GM12878 (cell line): ENCODE measurements at regions of chr7 and their contacts with region 1.

Region 1: GRCh38 chr7:18276383-18276782 is 219.2 kb upstream of the HDAC9 start:
- DNase-seq: no peak
- ATAC-seq: 0 out of 3 replicates have a peak, but pooled peaks have one; percentile 33
- H3K4me3 ChIP-seq: no peak overlapping the region
- H3K27ac ChIP-seq: no peak overlapping the region
- H3K4me1 ChIP-seq: no peaks in the 10 kb centered on the region
- H3K27me3 ChIP-seq: no peaks in the 10 kb centered on the region
- CTCF ChIP-seq: no peak
- EP300 ChIP-seq: no peak
- POLR2A ChIP-seq: no peak
- RAD21 ChIP-seq: no peak

Region 2: GRCh38 chr7:17946591-17946990 is 329.8 kb before region 1 on chr7:
- CTCF ChIA-PET with region 1: no interaction called
- POLR2A ChIA-PET with region 1: no interaction called
- RAD21 ChIA-PET with region 1: no interaction called
- SMC1A ChIA-PET with region 1: no interaction called
- in situ Hi-C with region 1: no loop called
- intact Hi-C with region 1: no loop called
- DNase-seq: no peak
- ATAC-seq: peak; percentile 89
- H3K4me3 ChIP-seq: no peak overlapping the region
- H3K27ac ChIP-seq: no peak overlapping the region
- H3K4me1 ChIP-seq: 0 out of 2 replicates have a peak, but pooled peaks cover under 1% of the 10 kb centered on the region
- H3K27me3 ChIP-seq: peaks cover 0 to 5% of the 10 kb centered on the region in 2 experiments; a peak in 1 of 4 replicates
- CTCF ChIP-seq: no peak
- EP300 ChIP-seq: no peak
- POLR2A ChIP-seq: no peak
- RAD21 ChIP-seq: no peak

Region 3: DNA sequence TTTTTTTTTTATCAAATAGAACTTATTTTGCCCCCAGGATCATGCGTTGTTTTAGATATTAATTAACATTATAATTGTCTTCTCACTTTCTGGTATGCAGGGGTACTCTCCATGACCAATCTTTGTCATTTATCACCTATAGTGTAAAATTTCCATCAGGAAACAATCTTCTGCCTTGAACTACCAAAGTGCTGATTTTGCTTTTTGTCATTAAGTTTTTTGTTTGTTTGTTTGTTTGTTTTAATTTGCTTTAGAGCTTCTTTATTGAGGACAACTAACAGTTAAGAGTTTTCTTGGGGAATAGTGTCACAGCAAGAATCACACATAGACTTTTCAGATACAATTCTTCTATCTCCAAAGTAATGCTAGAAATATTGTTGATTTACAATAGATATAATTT is 77.5 kb before region 1 on chr7:
- CTCF ChIA-PET with region 1: no interaction called
- POLR2A ChIA-PET with region 1: no interaction called
- RAD21 ChIA-PET with region 1: no interaction called
- SMC1A ChIA-PET with region 1: no interaction called
- in situ Hi-C with region 1: no loop called
- intact Hi-C with region 1: no loop called
- DNase-seq: no peak
- ATAC-seq: no peak
- H3K4me3 ChIP-seq: no peak overlapping the region
- H3K27ac ChIP-seq: no peak overlapping the region
- H3K4me1 ChIP-seq: no peaks in the 10 kb centered on the region
- H3K27me3 ChIP-seq: no peaks in the 10 kb centered on the region; a peak in 1 of 4 replicates
- CTCF ChIP-seq: no peak
- EP300 ChIP-seq: no peak
- POLR2A ChIP-seq: no peak
- RAD21 ChIP-seq: no peak

Region 4: GRCh38 chr7:18243731-18244130 is 32.7 kb before region 1 on chr7:
- CTCF ChIA-PET with region 1: no interaction called
- POLR2A ChIA-PET with region 1: no interaction called
- RAD21 ChIA-PET with region 1: no interaction called
- SMC1A ChIA-PET with region 1: no interaction called
- in situ Hi-C with region 1: no loop called
- intact Hi-C with region 1: no loop called
- DNase-seq: no peak
- ATAC-seq: no peak
- H3K4me3 ChIP-seq: no peak overlapping the region
- H3K27ac ChIP-seq: no peak overlapping the region
- H3K4me1 ChIP-seq: no peaks in the 10 kb centered on the region
- H3K27me3 ChIP-seq: no peaks in the 10 kb centered on the region
- CTCF ChIP-seq: no peak
- EP300 ChIP-seq: no peak
- POLR2A ChIP-seq: no peak
- RAD21 ChIP-seq: no peak

Region 5: DNA sequence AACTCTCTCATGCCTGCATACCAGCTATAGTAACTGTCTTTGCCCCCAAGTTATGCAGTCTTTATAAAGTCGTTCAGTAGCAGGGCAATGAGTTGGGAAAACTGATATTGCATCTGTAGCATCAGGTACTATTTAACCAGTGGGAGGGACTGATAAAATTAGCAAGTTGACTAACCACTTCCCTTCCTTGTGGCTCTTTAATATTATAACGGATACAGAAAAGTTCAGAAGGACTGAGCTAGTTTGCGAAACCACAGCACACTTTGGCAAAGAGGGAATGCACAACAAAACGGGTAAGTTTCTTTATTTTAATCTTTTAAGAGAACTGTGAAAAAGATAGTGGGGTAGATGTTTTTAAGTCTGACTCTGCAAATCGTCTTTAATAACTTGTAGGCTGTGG is 13.8 kb after region 1 on chr7:
- CTCF ChIA-PET with region 1: interaction called, 4 read pairs
- POLR2A ChIA-PET with region 1: no interaction called
- RAD21 ChIA-PET with region 1: interaction called, 3 read pairs
- SMC1A ChIA-PET with region 1: interaction called, 15 read pairs
- in situ Hi-C with region 1: no loop called
- intact Hi-C with region 1: no loop called
- DNase-seq: no peak
- ATAC-seq: peak; percentile 64
- H3K4me3 ChIP-seq: no peak overlapping the region
- H3K27ac ChIP-seq: no peak overlapping the region
- H3K4me1 ChIP-seq: no peaks in the 10 kb centered on the region
- H3K27me3 ChIP-seq: no peaks in the 10 kb centered on the region; a peak in 1 of 4 replicates
- CTCF ChIP-seq: no peak
- EP300 ChIP-seq: no peak
- POLR2A ChIP-seq: no peak
- RAD21 ChIP-seq: no peak

Region 6: DNA sequence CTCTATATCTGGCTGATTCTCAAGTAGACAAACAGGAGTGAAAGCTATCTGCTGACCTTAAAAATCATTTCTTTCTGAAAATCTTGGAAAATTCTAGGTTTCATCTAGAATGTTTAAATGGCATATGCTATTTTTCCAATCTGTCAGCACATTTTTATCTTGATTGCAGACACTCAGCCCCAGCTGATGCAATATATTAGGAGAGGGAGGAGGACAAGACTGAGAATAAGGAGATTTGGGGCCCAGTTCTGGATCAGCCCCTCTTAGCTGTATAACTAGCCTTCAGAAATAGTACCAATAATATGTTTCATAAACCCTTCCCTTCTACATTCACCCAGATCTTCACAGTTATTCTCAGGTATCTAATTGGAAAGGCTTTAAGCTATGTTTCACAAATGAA is 350.3 kb after region 1 on chr7:
- CTCF ChIA-PET with region 1: no interaction called
- POLR2A ChIA-PET with region 1: no interaction called
- RAD21 ChIA-PET with region 1: no interaction called
- SMC1A ChIA-PET with region 1: no interaction called
- in situ Hi-C with region 1: no loop called
- intact Hi-C with region 1: no loop called
- DNase-seq: no peak
- ATAC-seq: no peak
- H3K4me3 ChIP-seq: no peak overlapping the region
- H3K27ac ChIP-seq: no peak overlapping the region
- H3K4me1 ChIP-seq: no peaks in the 10 kb centered on the region
- H3K27me3 ChIP-seq: no peaks in the 10 kb centered on the region
- CTCF ChIP-seq: no peak
- EP300 ChIP-seq: no peak
- POLR2A ChIP-seq: no peak
- RAD21 ChIP-seq: no peak